Activated naive CD4-positive, alpha-beta T cell treated with anti-CD3 and anti-CD28 coated beads for 36 hours (primary cell): ENCODE measurements at regions of chr4 and their contacts with region 1.

Region 1: GRCh38 chr4:154982187-154983047 is 201.3 kb downstream of the RBM46 start:
- DNase-seq: peak; percentile 61
- H3K4me3 Mint-ChIP-seq: no peak overlapping the region
- H3K27ac Mint-ChIP-seq: no peak overlapping the region
- H3K4me1 Mint-ChIP-seq: no peaks in the 10 kb centered on the region
- H3K27me3 Mint-ChIP-seq: peaks cover 7% of the 10 kb centered on the region

Region 2: DNA sequence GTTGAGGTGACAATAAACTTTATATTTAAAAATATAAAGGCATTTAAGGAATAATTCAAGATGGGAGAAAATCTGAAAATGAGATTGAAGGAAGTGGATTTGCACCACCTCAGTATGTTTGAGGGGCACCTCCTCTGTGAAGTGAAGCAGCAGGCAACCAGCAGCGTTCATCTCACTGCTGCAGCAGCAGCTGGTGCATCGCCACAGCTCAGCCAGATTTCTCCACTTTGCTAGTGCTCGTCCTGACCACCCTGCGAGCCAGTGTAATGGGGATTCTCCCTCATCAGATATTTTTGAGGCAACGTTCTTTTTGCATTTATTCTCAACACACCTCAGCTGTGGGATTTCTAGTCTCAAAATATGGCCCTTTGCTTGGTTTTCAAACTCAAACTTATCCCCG is 224.7 kb before region 1 on chr4:
- CTCF ChIA-PET with region 1: no interaction called
- intact Hi-C with region 1: no loop called
- DNase-seq: no peak
- H3K4me3 Mint-ChIP-seq: no peak overlapping the region
- H3K27ac Mint-ChIP-seq: no peak overlapping the region
- H3K4me1 Mint-ChIP-seq: no peaks in the 10 kb centered on the region
- H3K27me3 Mint-ChIP-seq: peaks cover 11% of the 10 kb centered on the region

Region 3: GRCh38 chr4:154807042-154807630 is 175.3 kb before region 1 on chr4:
- CTCF ChIA-PET with region 1: no interaction called
- intact Hi-C with region 1: loop called (anchors 5 kb)
- DNase-seq: no peak
- H3K4me3 Mint-ChIP-seq: no peak overlapping the region
- H3K27ac Mint-ChIP-seq: no peak overlapping the region
- H3K4me1 Mint-ChIP-seq: no peaks in the 10 kb centered on the region
- H3K27me3 Mint-ChIP-seq: peaks cover 5% of the 10 kb centered on the region